ENCODE measurements at regions of chr15 and their contacts with region 1.

Region 1: GRCh38 chr15:48358229-48358641 is 27.0 kb downstream of the DUT start:
- DNase-seq: no peak
- H3K4me3 ChIP-seq: no peak overlapping the region
- CTCF ChIP-seq: peak; percentile 33

Region 2: GRCh38 chr15:47870956-47871625 is 487.1 kb before region 1 on chr15:
- CTCF ChIA-PET with region 1: no interaction called
- POLR2A ChIA-PET with region 1: no interaction called
- DNase-seq: peak; percentile 7
- H3K4me3 ChIP-seq: no peak overlapping the region
- CTCF ChIP-seq: no peak

Region 3: GRCh38 chr15:48373821-48374451 is 15.7 kb after region 1 on chr15:
- CTCF ChIA-PET with region 1: interaction called, 17 read pairs
- POLR2A ChIA-PET with region 1: interaction called, 3 read pairs
- DNase-seq: no peak
- H3K4me3 ChIP-seq: no peak overlapping the region
- CTCF ChIP-seq: no peak

Region 4: DNA sequence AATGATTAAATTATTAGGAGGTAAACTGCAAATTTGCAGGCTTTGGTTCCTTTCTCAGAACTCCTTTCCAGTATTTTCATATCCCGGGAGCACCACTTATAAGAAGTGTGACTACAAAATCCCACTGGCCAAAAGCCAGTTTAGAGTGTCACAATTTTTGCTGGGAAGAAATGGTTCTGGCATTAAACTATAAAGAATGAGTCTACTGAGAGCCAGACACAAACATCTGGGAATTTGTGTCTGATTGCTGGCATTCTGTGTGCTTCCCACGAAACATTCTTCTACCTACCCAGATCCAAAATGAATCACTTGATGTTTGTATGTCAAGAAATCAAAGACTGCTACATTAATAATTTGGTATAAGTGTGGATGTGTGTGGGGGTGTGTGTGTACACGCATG is 55.8 kb after region 1 on chr15:
- CTCF ChIA-PET with region 1: interaction called, 43 read pairs
- POLR2A ChIA-PET with region 1: no interaction called
- DNase-seq: no peak
- H3K4me3 ChIP-seq: no peak overlapping the region
- CTCF ChIP-seq: no peak

Region 5: DNA sequence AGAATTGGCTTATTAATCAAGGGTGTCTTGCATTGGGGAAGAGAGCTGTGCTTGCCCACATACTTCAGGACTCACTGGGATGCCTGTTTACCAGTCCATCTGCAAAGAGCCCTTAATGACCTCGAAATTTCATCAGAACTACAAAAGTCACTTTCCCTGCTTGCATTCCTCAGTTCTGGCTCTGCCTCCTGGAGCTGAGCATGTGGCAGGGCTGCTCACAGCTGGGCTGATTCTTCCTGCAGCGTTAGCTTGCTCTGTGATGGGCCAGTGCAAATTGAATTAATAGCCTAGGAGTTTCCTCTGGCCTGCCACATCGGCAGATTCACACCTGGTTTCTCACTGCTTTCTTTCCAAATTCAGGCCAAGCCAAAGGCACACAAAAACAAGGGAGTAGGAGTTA is 81.8 kb after region 1 on chr15:
- CTCF ChIA-PET with region 1: interaction called, 13 read pairs
- POLR2A ChIA-PET with region 1: interaction called, 3 read pairs
- DNase-seq: peak; percentile 85
- H3K4me3 ChIP-seq: no peak overlapping the region
- CTCF ChIP-seq: no peak

Region 6: DNA sequence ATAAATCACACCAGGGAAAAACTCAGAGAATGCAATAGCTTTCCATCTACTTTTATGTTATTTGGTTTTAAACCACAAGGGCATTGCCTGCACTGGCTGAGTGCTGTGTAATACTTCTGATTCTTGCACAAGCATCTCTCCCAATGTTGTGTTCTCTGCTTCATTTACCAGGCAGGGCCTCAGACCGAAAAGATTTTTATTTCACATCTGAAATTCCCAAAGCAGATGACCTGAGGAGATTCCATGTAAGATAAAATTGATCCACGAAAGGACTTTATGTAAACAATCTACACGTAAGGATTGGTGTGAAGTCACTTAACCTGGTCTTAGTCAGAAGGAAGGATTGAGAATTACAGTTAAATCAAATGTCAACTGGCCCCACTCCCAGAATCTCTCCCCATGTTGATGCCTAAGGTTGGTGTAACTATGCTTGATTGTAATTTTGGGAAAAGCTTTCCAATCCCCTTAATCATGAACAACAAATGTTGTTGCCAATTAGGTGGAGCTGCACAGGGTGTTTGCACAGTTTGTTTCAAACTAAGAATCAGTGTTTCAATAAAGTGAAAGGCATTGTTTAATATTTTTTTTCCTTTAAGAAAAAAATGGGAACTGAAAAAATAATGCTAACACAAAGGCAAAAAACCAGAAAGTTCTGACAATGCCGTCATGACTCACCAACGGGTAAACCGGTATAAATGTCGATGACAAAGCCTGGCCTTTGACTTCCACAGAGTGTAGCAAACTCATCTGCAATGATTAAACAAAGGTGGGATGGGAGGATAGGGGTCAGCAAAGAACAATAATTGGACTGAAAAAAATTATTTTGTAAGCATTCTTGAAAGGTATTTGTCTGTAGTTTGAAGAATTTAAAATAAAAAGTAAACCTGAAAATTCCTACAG is 101.6 kb after region 1 on chr15:
- CTCF ChIA-PET with region 1: interaction called, 21 read pairs
- POLR2A ChIA-PET with region 1: no interaction called
- DNase-seq: peak; percentile 73
- H3K4me3 ChIP-seq: no peak overlapping the region
- CTCF ChIP-seq: no peak